Naive thymus-derived CD4-positive, alpha-beta T cell (primary cell): ENCODE measurements at regions of chr2 and their contacts with region 1.

Region 1: DNA sequence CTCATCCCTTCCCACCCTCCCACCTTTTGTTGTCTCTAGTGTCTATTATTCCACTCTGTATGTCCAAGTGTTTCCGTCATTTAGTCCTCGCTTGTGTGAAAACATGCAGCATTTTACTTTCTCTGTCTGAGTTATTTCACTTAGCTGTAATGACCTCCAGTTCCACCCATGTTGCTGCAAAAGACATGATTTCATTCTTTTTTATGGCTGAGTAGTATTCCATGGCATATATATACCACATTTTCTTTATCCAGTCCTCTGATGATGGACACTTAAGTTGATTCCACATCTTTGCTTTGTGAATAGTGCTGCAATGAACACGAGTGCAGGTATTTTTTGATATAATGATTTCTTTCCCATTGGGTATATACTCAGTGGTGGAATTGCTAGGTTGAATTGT is 296.7 kb downstream of the MBD5 start:
- DNase-seq: no peak
- ATAC-seq: no peak
- H3K4me3 ChIP-seq: no peak overlapping the region
- H3K4me3 Mint-ChIP-seq: no peak overlapping the region
- H3K27ac ChIP-seq: no peak overlapping the region
- H3K27ac Mint-ChIP-seq: no peak overlapping the region
- H3K4me1 ChIP-seq: no peaks in the 10 kb centered on the region
- H3K4me1 Mint-ChIP-seq: peaks cover 0 to 5% (median 0%) of the 10 kb centered on the region in 7 donors
- H3K27me3 ChIP-seq: no peaks in the 10 kb centered on the region
- H3K27me3 Mint-ChIP-seq: no peaks in the 10 kb centered on the region

Region 2: GRCh38 chr2:148273158-148273691 is 44.4 kb before region 1 on chr2:
- CTCF ChIA-PET with region 1: no interaction called
- POLR2A ChIA-PET with region 1: no interaction called
- intact Hi-C with region 1: no loop called
- DNase-seq: no peak
- ATAC-seq: no peak
- H3K4me3 ChIP-seq: no peak overlapping the region
- H3K4me3 Mint-ChIP-seq: no peak overlapping the region
- H3K27ac ChIP-seq: no peak overlapping the region
- H3K27ac Mint-ChIP-seq: peak overlapping the region in 2 of 9 donors; percentile 21 to 65
- H3K4me1 ChIP-seq: no peaks in the 10 kb centered on the region
- H3K4me1 Mint-ChIP-seq: peaks cover 0 to 6% (median 0%) of the 10 kb centered on the region in 7 donors
- H3K27me3 ChIP-seq: no peaks in the 10 kb centered on the region
- H3K27me3 Mint-ChIP-seq: no peaks in the 10 kb centered on the region

Region 3: DNA sequence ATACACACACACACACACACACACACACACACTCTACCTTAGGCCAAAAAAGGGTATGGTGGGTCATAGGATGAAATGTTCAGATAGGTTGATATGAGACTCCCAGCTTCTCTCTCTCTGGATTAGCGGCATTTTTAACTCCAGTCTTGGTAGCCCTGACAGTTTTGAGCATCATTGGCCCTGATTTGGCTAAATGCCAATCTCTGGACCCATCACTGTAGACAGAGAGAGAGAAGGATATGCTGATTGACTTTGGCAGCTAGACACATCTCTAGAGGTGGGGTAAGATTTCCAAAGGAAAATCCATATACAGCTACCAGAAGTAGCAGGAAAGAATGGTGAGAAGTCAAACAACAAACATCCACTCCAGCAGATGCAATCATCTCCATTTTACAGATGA is 12.5 kb after region 1 on chr2:
- CTCF ChIA-PET with region 1: interaction called, 3 read pairs
- POLR2A ChIA-PET with region 1: no interaction called
- intact Hi-C with region 1: loop called in 1 of 2 experiments (anchors 2 kb)
- DNase-seq: no peak
- ATAC-seq: no peak
- H3K4me3 ChIP-seq: no peak overlapping the region
- H3K4me3 Mint-ChIP-seq: no peak overlapping the region
- H3K27ac ChIP-seq: no peak overlapping the region
- H3K27ac Mint-ChIP-seq: no peak overlapping the region
- H3K4me1 ChIP-seq: no peaks in the 10 kb centered on the region
- H3K4me1 Mint-ChIP-seq: peaks cover 0 to 4% (median 0%) of the 10 kb centered on the region in 7 donors
- H3K27me3 ChIP-seq: no peaks in the 10 kb centered on the region
- H3K27me3 Mint-ChIP-seq: no peaks in the 10 kb centered on the region